ENCODE measurements at regions of chr11 and their contacts with region 1.

Region 1: DNA sequence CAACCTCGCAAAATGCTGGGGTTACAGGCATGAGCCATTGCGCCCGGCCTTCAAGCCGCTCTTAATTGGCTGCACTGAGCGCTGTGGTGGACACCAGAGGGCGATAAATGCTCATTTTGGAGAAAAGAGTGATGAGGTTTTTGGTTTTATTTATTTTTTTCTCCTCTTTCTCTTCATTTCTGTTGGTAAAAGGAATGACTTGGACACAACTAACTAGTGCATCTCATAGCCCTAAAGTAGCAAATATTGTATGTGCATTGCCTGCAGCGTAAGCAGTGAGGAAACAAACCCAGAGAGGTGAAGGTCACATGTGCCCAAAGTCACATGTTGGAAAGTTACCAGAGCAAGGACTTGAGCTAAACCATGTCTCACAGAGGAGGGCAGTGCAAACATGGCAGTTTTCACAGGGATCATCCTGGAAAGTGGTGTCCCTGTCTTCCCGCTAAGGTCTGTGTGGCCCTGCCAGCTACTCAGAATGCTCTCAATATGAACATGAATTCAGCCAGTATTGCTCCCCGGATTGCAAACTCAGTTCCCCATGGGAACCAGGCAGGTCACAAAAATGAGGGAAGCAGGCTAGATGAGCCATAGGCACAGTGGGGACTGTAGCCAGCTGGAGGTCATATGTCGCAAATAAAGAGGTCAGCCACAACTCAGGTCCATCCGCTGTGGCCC is 8.6 kb upstream of the CD82 start:
- DNase-seq: peak; percentile 85
- ATAC-seq: peak; percentile 66
- H3K4me3 Mint-ChIP-seq: no peak overlapping the region
- H3K27ac Mint-ChIP-seq: peak overlapping the region; percentile 40
- H3K4me1 Mint-ChIP-seq: peaks cover 30% of the 10 kb centered on the region
- H3K27me3 Mint-ChIP-seq: no peaks in the 10 kb centered on the region
- CTCF ChIP-seq: peak; percentile 80

Region 2: GRCh38 chr11:44388828-44389657 is 167.8 kb before region 1 on chr11:
- CTCF ChIA-PET with region 1: no interaction called
- POLR2A ChIA-PET with region 1: no interaction called
- intact Hi-C with region 1: no loop called
- DNase-seq: no peak
- ATAC-seq: no peak
- H3K4me3 Mint-ChIP-seq: no peak overlapping the region
- H3K27ac Mint-ChIP-seq: no peak overlapping the region
- H3K4me1 Mint-ChIP-seq: no peaks in the 10 kb centered on the region
- H3K27me3 Mint-ChIP-seq: peaks cover 14% of the 10 kb centered on the region
- CTCF ChIP-seq: no peak

Region 3: DNA sequence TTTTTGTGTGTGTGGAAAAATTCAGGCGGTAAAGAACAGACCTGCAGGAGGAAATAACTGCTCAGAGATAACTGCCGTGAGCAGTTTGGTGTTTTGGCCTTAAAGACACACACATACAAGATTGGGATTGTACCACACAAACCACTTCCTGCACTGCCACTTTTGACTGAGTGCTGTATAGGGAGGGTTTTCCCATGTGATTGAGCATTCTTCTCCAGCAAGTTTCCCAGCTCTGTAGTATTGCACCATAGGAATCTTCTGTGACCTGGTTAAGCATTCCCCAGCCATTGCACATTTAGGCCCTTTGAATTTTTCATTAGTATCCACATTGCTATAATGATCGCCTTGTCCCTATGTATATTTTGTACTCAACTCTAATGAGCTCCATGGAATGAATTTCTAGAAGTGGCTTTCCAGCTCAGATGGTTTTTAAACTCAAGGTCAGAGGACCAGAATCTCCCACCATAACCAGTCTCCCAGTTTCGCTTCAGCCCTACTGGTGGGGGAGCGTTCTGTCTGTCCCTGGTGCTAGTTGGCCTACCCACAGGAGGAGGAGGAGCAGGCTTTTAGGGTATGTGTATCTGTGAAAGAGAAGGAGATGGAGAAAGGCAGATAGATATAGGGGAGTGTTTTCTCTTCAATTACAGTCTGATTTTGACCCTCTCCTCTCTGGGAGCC is 17.9 kb after region 1 on chr11:
- CTCF ChIA-PET with region 1: interaction called, 10 read pairs
- POLR2A ChIA-PET with region 1: interaction called, 5 read pairs
- intact Hi-C with region 1: no loop called
- DNase-seq: peak; percentile 84
- ATAC-seq: peak; percentile 53
- H3K4me3 Mint-ChIP-seq: peak overlapping the region; percentile 71
- H3K27ac Mint-ChIP-seq: peak overlapping the region; percentile 100
- H3K4me1 Mint-ChIP-seq: peaks cover 90% of the 10 kb centered on the region
- H3K27me3 Mint-ChIP-seq: no peaks in the 10 kb centered on the region
- CTCF ChIP-seq: no peak

Region 4: DNA sequence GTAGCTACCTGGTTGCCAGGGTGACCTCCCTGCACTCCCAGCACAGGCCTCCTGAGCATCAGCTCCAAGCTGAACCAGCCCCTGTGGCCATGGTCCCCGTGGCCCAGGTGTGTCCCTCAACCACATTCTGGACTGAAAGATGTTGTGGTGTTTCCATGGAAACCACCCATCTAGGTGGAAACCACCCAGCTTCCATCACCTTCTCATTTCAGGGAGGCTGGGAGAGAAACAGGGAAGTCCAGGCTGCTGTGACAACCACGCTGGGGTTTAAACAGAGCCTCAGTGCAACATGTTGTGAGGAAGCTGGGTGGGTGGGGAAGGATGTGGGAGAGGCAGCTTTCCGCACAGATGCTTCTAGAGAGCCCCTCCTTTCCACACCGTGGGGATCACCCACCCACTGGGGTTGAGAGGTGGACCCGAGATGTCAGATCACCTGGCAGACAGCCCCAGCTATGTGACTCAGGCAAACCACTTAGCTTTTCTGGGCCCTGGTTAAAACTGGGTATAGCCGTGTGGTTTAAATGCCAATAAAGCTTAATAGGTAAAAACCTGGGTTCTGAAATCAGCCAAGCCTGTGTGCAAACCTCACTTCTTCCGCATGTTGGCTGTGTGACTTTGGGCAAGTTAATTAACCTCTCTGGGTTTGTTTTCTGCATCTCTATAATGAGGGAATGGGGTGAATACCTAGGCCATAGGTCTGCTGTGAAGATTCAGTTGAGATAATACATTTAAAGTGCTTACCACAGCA is 55.0 kb after region 1 on chr11:
- CTCF ChIA-PET with region 1: interaction called, 307 read pairs
- POLR2A ChIA-PET with region 1: interaction called, 8 read pairs
- intact Hi-C with region 1: loop called (anchors 1 kb)
- DNase-seq: peak; percentile 90
- ATAC-seq: peak; percentile 79
- H3K4me3 Mint-ChIP-seq: no peak overlapping the region
- H3K27ac Mint-ChIP-seq: peak overlapping the region; percentile 89
- H3K4me1 Mint-ChIP-seq: peaks cover 68% of the 10 kb centered on the region
- H3K27me3 Mint-ChIP-seq: no peaks in the 10 kb centered on the region
- CTCF ChIP-seq: no peak

Region 5: GRCh38 chr11:44634401-44635281 is 77.8 kb after region 1 on chr11:
- CTCF ChIA-PET with region 1: interaction called, 12 read pairs
- POLR2A ChIA-PET with region 1: interaction called, 3 read pairs
- intact Hi-C with region 1: loop called (anchors 5 kb)
- DNase-seq: peak; percentile 68
- ATAC-seq: peak; percentile 61
- H3K4me3 Mint-ChIP-seq: no peak overlapping the region
- H3K27ac Mint-ChIP-seq: no peak overlapping the region
- H3K4me1 Mint-ChIP-seq: peaks cover 2% of the 10 kb centered on the region
- H3K27me3 Mint-ChIP-seq: peaks cover 12% of the 10 kb centered on the region
- CTCF ChIP-seq: no peak

Region 6: GRCh38 chr11:44645827-44646226 is 89.0 kb after region 1 on chr11:
- CTCF ChIA-PET with region 1: no interaction called
- POLR2A ChIA-PET with region 1: no interaction called
- intact Hi-C with region 1: no loop called
- DNase-seq: no peak
- ATAC-seq: no peak
- H3K4me3 Mint-ChIP-seq: no peak overlapping the region
- H3K27ac Mint-ChIP-seq: no peak overlapping the region
- H3K4me1 Mint-ChIP-seq: no peaks in the 10 kb centered on the region
- H3K27me3 Mint-ChIP-seq: peaks cover 23% of the 10 kb centered on the region
- CTCF ChIP-seq: no peak

Region 7: GRCh38 chr11:44911029-44911814 is 354.4 kb after region 1 on chr11:
- CTCF ChIA-PET with region 1: interaction called, 11 read pairs
- POLR2A ChIA-PET with region 1: no interaction called
- intact Hi-C with region 1: no loop called
- DNase-seq: peak; percentile 94
- ATAC-seq: peak; percentile 89
- H3K4me3 Mint-ChIP-seq: no peak overlapping the region
- H3K27ac Mint-ChIP-seq: no peak overlapping the region
- H3K4me1 Mint-ChIP-seq: peaks cover 4% of the 10 kb centered on the region
- H3K27me3 Mint-ChIP-seq: peaks cover 2% of the 10 kb centered on the region
- CTCF ChIP-seq: peak; percentile 68

Region 8: GRCh38 chr11:45110562-45110961 is 553.7 kb after region 1 on chr11:
- CTCF ChIA-PET with region 1: no interaction called
- POLR2A ChIA-PET with region 1: no interaction called
- intact Hi-C with region 1: no loop called
- DNase-seq: peak; percentile 48
- ATAC-seq: peak; percentile 67
- H3K4me3 Mint-ChIP-seq: no peak overlapping the region
- H3K27ac Mint-ChIP-seq: no peak overlapping the region
- H3K4me1 Mint-ChIP-seq: no peaks in the 10 kb centered on the region
- H3K27me3 Mint-ChIP-seq: peaks cover 27% of the 10 kb centered on the region
- CTCF ChIP-seq: peak; percentile 78

Measured in activated CD8-positive, alpha-beta T cell treated with anti-CD3 and anti-CD28 coated beads for 36 hours (primary cell).